Cardiac septum (tissue), 1 donor: ENCODE measurements at regions of chr9 and their contacts with region 1.

Region 1: DNA sequence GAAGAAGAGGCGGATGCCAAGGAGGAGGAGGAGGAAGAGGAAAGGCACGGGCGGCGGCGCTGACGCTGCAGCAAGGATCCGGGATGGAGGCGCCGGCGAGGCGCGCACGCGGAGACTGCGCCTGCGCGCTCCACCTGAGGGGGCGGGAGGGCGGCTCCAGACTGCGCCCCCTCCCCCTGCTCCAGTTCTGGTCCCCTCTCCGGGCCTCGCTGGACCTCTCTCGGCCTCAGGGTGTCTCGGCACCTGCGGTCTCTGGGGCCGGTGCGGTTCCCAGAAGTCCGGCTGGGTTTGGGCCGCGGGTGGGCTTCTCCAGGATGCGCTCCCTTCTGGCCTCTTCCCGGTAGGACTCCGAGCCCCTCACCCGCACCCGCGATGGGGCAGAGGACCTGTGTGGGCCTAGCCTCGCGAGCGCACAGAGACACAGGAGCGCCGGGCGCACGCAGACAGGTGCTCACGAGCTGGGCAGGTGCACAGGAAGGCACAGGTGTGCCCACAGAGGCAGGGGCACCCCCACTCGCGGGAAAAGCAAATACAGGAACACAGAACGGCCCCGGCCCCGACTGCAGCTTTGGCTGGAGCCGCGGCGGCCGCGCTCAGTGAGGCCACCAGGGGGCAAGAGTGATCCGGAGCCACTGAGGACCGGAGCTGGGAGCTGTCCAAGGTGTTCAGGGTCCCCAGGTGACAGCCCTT is at the start of gene NPDC1:
- DNase-seq: peak; percentile 90
- total RNA-seq, gene NPDC1: 96.4 TPM

Region 2: DNA sequence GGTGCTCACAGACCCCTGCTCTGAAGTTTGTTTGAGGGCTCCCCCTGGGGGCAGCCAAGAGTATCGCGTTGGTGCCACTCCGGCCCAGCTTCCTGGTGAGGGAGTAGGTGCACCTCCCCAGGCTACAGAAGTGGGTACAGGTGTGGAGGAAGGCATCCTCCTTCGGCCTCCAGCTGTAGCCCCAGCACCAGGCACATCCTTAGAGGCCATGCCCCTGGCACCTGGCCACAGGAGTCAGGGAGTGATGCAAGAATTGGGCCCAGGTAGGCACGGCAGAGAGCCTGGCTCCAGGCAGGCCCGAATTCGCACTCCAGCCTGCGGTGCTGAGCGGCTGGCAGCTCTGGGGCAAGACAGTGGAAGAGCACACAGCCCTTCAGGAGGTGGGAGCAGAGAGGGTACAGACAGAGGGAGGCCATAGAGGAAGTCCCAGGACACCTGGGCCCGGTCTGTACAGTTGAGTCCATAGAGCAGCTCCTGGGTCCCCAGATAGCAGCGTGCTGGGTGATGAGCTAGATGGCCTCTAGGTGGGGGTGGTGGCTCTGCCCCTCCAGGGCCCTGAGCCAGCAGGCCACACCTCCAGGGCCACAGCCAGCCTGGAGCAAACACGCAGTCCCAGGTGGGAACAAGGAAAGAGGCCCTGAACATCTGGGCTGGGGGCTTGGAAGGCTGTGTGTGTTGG is 21.8 kb after region 1 on chr9:
- intact Hi-C with region 1: loop called (anchors 2 kb)
- DNase-seq: peak; percentile 93